Right lobe of liver (tissue), 6 donors: ENCODE measurements at regions of chr10 and their contacts with region 1.

Region 1: DNA sequence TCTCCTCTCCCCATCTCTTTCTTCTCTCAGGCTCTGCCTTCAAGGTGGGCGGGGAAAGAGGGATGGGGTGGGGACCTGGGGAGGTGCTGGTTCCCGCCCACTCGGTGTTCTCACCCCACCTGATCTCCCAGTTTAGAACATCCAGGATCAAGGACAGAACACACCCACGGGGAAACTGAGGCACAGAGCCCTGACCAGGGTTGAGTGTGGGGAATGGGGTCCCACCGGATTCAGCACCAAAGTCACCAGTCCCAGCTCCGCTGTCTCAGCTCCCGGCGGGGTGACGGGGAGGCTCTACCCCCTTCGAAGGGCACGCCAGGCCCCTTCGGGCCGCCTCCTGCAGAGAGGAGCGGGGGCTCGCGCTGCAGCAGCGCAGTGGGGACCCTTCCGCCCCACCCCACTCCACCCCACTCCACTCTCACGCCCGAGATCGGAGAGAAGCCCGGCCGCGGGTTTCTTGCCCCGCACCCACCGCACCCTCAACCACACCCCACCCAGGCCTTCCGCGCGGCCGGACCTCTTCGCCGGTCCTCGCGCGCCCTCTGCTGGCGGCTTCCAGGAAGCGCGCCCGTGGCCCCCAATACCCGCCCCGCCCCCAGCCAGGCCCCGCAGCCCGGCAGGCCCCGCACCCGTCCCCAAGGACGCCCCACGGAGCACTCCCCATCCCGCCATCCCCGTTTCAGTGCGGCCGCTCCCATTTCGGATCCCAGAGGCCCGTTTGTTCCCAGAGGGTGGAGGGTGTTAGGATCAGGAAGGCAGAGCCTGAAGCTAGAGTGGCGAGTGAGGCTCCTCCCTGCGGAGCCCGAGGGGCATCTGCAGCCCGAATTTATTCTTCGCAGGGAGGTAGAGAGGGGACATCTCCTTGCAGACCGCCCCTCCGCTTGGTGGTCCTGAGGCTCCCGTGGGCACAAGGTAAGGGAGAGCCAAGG is 18.0 kb downstream of the POLL start:
- DNase-seq: peak; percentile 82 to 86 (median 82)
- ATAC-seq: peak; percentile 89 to 97 (median 93)
- H3K4me3 ChIP-seq: peak overlapping the region; percentile 43 to 52 (median 50)
- H3K27ac ChIP-seq: no peak overlapping the region
- H3K4me1 ChIP-seq: peaks cover 0 to 12% (median 3%) of the 10 kb centered on the region in 4 donors
- H3K27me3 ChIP-seq: peaks cover 0 to 13% of the 10 kb centered on the region in 2 donors
- CTCF ChIP-seq: peak; percentile 68 to 87 (median 80)
- POLR2A ChIP-seq: no peak

Region 2: GRCh38 chr10:101214446-101215396 is 355.4 kb before region 1 on chr10:
- intact Hi-C with region 1: loop called in 1 of 2 experiments (anchors 5 kb)
- DNase-seq: peak in 2 of 3 donors; percentile 58 to 65
- ATAC-seq: peak; percentile 57 to 77 (median 72)
- H3K4me3 ChIP-seq: no peak overlapping the region
- H3K27ac ChIP-seq: no peak overlapping the region
- H3K4me1 ChIP-seq: peaks cover 0 to 18% (median 0%) of the 10 kb centered on the region in 4 donors
- H3K27me3 ChIP-seq: peaks cover 31 to 49% of the 10 kb centered on the region in 2 donors
- CTCF ChIP-seq: peak; percentile 55 to 90 (median 85)
- POLR2A ChIP-seq: no peak

Region 3: GRCh38 chr10:101297901-101298486 is 272.1 kb before region 1 on chr10:
- intact Hi-C with region 1: loop called (anchors 10 kb)
- DNase-seq: peak; percentile 46 to 65 (median 53)
- ATAC-seq: peak; percentile 57 to 68 (median 62)
- H3K4me3 ChIP-seq: no peak overlapping the region
- H3K27ac ChIP-seq: no peak overlapping the region
- H3K4me1 ChIP-seq: no peaks in the 10 kb centered on the region
- H3K27me3 ChIP-seq: no peaks in the 10 kb centered on the region
- CTCF ChIP-seq: peak; percentile 51 to 84 (median 81)
- POLR2A ChIP-seq: no peak

Region 4: GRCh38 chr10:101611096-101611905 is 41.2 kb after region 1 on chr10:
- intact Hi-C with region 1: no loop called
- DNase-seq: no peak
- ATAC-seq: no peak
- H3K4me3 ChIP-seq: no peak overlapping the region
- H3K27ac ChIP-seq: no peak overlapping the region
- H3K4me1 ChIP-seq: no peaks in the 10 kb centered on the region
- H3K27me3 ChIP-seq: no peaks in the 10 kb centered on the region
- CTCF ChIP-seq: no peak
- POLR2A ChIP-seq: no peak